ENCODE measurements at regions of chr21 and their contacts with region 1.

Region 1: GRCh38 chr21:33874161-33874560 is 41.4 kb downstream of the ATP5PO start:
- DNase-seq: peak; percentile 49

Region 2: DNA sequence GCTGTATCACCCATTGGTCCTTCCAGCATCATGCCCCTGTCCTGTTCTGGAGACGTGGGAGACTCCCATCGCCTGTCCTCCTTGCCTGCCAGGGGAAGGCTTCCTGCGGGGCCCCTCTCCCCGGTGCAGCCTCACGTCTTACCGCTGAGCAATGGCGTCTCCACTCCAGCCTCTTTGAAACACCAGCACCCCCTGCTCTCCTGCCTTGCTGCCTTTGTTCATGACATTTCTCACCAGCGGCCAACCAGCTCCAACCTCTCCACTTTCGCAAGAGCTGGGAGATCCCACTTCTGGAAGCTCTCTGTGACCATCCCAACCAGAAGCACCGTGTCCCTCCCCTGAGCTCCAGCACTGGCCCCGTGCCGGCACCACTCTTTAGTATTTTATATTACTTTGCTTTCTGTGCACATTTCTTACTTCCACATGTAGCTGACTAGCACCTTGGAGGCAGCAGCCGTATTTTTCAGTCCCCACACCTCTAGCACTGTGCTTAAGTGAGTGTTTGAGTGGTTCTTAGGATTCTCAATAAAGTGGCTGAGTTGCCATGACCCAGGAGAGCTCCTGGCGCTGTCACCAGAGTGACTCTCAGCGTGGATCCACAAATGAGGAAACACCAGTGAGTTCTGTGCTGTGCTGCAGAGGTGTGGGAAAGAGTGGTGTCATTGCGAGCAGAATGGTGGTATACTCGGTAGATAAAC is 42.0 kb before region 1 on chr21:
- intact Hi-C with region 1: loop called in 1 of 2 experiments (anchors 1 kb)
- DNase-seq: peak; percentile 50

Region 3: DNA sequence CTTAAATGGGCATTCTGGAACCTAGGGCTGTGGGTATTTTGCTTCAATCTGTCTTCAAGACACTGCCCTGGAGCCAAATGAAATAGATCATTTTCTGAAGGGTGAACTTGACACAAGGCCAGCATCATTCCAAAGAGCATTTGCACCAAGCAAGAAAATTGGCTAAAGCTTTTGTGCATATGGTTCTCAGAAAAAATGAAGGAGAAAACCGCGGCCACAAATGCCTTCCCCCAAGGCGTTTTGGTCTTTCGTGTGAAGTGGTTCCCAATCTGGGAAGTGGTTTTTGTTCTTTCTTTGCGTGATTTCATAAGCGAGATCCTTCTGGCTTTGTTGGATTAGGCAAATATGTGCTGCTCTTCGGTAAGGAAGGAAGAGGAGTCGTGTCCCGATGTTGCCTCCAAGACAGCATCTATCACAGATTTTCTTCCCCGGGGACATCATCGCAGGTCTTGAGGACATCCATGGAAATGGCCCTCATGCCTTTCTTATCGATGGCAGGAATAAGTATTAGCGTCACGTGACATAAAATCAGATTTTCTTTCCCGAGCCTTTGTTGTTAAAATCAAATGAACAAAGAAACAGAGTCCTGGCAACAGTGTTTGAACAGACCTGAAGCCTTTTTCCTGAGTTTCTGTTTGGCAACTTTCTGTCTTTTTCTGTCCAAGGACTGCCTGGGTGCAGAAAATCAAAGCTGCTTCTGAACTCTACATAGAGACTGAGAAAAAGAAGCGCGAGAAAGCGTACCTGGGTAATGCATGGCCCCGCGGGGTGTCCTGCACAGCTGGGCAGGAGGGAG is 10.4 kb after region 1 on chr21:
- intact Hi-C with region 1: loop called in 1 of 2 experiments (anchors 1 kb)
- DNase-seq: no peak